ENCODE measurements at regions of chr13 and their contacts with region 1.

Region 1: GRCh38 chr13:20703780-20704445 is 414 bp downstream of the IL17D start:
- DNase-seq: peak; percentile 62 to 81
- H3K4me3 ChIP-seq: peak overlapping the region; percentile 65 to 85
- H3K27ac ChIP-seq: peak overlapping the region; percentile 36 to 49
- H3K4me1 ChIP-seq: peaks cover 0 to 25% (median 7%) of the 10 kb centered on the region in 4 donors
- H3K27me3 ChIP-seq: no peaks in the 10 kb centered on the region
- CTCF ChIP-seq: peak; percentile 55 to 77

Region 2: DNA sequence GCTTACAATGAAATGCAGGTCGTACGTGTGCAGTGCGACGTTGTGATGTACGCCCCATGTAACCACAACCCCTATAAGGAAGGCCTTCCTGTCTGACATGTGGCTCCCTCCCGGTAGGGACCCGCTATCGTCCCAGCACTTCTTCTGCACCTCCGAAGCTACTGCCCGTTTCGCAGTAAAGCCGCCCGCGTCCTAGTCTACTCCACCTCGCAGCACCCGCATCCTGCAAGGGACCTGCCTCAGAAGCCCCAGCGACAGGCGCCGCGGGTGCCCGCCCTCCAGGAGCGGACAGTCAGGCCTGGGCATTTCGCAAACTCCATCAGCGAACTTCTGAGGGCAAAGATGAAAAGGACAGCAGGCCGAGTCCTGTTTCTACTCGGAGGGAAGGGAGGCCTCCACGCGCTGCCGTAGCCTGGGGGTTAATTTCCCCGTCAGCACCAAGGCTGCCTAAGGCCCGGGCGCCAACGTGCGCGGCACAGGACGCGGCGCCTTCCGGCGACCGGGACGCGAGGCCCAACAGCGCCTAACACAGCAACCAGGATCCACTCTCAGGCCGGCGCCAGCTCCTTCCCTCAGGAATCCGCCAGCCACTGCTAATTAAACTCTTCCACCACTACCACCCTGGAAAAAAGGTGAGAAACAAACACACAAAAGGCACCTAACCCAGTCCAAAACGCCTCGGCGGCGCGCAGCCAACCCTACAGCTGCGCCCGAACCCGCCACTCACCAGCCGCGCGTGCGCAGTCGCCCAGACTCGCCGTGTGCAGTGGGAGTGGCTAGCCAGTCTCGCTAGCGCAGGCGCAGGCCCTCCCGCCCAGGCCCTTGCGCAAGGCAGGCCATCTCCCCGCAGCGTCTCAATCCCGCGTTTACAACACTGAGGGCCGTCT is 69.5 kb after region 1 on chr13 and contains the start of gene EEF1AKMT1:
- intact Hi-C with region 1: loop called (anchors 5 kb)
- DNase-seq: peak; percentile 89 to 96
- H3K4me3 ChIP-seq: peak within 1 kb of the TSS; percentile 61 to 70
- H3K27ac ChIP-seq: peak within 1 kb of the TSS; percentile 86 to 92
- H3K4me1 ChIP-seq: peaks cover 0 to 11% (median 9%) of the 10 kb centered on the region in 4 donors
- H3K27me3 ChIP-seq: no peaks in the 10 kb centered on the region
- CTCF ChIP-seq: no peak

Region 3: GRCh38 chr13:20828539-20829364 is 124.8 kb after region 1 on chr13:
- intact Hi-C with region 1: loop called (anchors 5 kb)
- DNase-seq: no peak
- H3K4me3 ChIP-seq: peak overlapping the region; percentile 11 to 28
- H3K27ac ChIP-seq: peak overlapping the region; percentile 5 to 29
- H3K4me1 ChIP-seq: peaks cover 0 to 31% (median 2%) of the 10 kb centered on the region in 4 donors
- H3K27me3 ChIP-seq: no peaks in the 10 kb centered on the region
- CTCF ChIP-seq: peak; percentile 73 to 83

Region 4: DNA sequence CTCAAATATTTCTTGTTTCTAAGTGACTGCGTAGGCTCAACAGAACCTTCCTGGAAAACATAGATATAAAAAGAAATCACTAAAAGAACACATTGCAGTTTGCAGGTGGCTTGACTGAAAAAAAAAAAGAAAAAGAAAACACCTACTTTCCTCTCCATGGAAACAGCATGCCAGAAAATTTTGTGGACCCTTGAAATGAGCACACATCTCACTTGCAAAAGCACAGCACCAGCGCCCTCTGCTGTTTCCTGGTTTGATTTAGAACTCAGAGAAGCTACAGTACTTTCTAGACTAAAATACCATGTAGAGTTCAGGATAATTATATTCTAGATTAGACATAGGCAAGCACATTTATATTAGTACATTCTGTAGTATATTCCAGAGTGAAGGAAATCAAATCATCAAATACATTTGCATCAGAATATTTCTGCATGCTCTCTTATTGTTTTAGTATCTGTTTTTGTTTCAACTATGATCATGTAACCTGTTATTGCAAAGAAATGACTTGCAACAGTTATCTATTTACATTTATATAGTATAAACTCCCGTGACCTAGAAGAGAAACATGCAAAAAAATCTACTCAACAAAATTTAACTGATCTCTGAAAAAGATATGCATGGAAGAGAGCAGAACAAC is 221.0 kb after region 1 on chr13:
- intact Hi-C with region 1: loop called (anchors 10 kb)
- DNase-seq: peak; percentile 75 to 79
- H3K4me3 ChIP-seq: no peak overlapping the region
- H3K27ac ChIP-seq: no peak overlapping the region
- H3K4me1 ChIP-seq: no peaks in the 10 kb centered on the region
- H3K27me3 ChIP-seq: no peaks in the 10 kb centered on the region
- CTCF ChIP-seq: peak; percentile 59 to 66

Measured in tibial artery (tissue), 4 donors.